ENCODE measurements at regions of chr22 and their contacts with region 1.

Region 1: DNA sequence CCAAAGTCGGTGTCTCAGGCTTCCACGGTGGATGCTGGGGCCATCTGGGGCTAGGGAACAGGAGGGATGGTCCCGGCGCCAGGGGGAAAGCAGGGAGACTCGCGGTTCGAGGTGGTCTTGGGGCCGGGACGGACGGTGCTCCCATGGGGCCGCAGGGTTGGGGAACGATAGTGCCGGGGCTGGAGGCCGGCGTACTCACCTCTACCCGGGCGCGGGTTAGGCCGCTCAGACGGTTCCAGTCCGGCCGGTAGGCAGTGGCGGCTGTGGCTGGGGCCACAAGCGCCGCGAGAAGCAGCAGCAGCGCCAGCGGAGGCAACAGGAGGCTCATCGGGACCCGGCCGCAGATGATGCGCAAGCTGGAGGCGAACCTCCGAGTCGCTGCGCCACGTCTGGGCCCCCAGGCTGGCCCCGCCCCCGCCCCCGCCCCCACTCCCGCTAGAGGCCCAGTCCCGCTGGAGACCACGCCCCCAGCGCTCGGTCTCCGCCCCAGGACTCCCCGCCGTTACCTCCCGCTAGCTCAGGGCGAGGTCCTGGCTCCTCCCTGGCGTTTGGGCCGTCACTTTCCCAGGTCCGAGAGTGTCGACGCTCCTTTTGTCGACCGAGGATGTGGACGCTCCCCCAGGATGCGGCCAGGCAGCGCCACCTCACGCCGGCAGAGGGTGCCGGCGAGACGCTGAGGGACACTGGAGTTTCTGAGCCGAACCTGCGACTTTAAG is at the start of gene SELENOM:
- DNase-seq: peak; percentile 99
- H3K4me3 Mint-ChIP-seq: peak within 1 kb of the TSS; percentile 82
- H3K27ac Mint-ChIP-seq: peak within 1 kb of the TSS; percentile 96
- H3K4me1 Mint-ChIP-seq: peaks cover 23% of the 10 kb centered on the region
- H3K27me3 Mint-ChIP-seq: no peaks in the 10 kb centered on the region
- CTCF ChIP-seq: peak; percentile 92
- total RNA-seq, gene SELENOM: 44.9 and 88.7 TPM in 2 replicates

Region 2: GRCh38 chr22:30650508-30651116 is 456.7 kb before region 1 on chr22:
- CTCF ChIA-PET with region 1: no interaction called
- POLR2A ChIA-PET with region 1: no interaction called
- intact Hi-C with region 1: no loop called
- DNase-seq: no peak
- H3K4me3 Mint-ChIP-seq: no peak overlapping the region
- H3K27ac Mint-ChIP-seq: no peak overlapping the region
- H3K4me1 Mint-ChIP-seq: no peaks in the 10 kb centered on the region
- H3K27me3 Mint-ChIP-seq: no peaks in the 10 kb centered on the region
- CTCF ChIP-seq: no peak

Region 3: DNA sequence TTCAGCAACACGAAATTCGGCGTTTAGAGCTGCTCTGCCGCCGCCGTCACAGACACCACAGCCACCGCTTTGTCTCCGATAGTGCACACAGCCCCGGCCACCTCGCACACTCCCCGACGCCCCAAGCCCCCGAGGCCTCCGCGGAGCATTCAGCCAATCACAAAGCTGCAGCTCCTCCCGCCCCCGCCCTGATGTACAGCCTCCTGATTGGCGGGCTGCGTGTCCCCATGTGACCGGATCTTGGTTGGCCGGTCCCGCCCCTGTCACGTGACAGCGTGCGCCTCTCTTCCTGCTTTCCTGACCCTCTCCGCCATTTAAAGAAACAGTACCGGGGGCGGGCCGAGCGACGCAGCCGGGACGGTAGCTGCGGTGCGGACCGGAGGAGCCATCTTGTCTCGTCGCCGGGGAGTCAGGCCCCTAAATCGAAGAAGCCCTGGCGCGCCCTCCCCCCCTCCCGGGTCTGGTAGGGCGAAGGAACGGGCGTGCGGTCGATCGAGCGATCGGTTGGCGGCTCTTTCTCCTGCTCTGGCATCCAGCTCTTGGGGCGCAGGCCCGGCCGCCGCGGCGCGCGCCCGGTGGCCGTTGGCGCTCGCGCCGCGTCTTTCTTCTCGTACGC is 138.3 kb before region 1 on chr22 and contains the start of gene TUG1:
- CTCF ChIA-PET with region 1: interaction called, 4 read pairs
- POLR2A ChIA-PET with region 1: interaction called, 14 read pairs
- intact Hi-C with region 1: no loop called
- DNase-seq: peak; percentile 98
- H3K4me3 Mint-ChIP-seq: peak within 1 kb of the TSS; percentile 88
- H3K27ac Mint-ChIP-seq: peak within 1 kb of the TSS; percentile 88
- H3K4me1 Mint-ChIP-seq: peaks cover 28% of the 10 kb centered on the region
- H3K27me3 Mint-ChIP-seq: no peaks in the 10 kb centered on the region
- CTCF ChIP-seq: no peak
- total RNA-seq, gene TUG1: 85.5 and 99.0 TPM in 2 replicates

Region 4: DNA sequence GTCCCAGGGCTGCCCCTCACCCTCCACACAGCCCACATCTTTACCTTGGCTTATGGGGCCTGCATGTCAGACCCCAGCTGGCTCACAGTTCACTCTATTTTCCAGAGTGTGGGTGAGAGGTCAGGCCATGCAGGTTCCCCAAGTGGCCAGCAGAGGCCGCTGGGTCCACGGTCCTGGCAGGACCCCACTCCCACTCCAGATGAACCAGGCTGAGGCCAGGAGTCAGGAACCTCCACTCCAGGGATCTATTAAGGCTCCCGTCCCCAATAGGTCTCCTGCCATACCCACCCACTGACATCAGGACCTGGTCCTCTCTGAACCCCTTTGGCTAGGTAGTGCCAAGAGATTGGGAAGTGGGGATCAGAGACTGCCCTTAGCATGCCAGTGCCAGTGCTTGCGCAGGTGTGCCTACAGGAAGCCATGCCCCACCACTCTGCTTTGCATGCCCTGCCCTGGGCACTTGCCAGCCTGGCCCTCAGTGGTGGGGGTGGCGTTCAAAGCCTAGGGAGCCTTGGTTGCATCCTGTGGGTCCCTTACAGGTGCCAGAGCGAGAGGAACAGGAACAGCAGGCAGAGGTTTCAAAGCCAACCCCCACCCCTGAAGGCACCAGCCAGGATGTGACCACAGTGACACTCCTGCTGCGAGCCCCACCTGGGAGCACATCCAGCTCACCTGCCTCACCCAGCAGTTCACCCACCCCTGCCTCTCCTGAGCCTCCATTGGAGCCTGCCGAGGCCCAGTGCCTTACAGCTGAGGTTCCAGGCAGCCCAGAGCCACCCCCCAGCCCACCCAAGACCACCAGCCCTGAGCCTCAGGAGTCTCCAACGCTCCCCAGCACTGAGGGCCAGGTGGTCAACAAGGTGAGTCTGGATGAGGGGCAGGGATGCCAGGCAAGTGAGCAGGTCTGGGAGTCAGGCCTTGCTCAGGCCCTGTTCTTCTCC is 17.9 kb before region 1 on chr22:
- CTCF ChIA-PET with region 1: interaction called, 21 read pairs
- POLR2A ChIA-PET with region 1: interaction called, 8 read pairs
- intact Hi-C with region 1: loop called (anchors 1 kb)
- DNase-seq: peak; percentile 32
- H3K4me3 Mint-ChIP-seq: no peak overlapping the region
- H3K27ac Mint-ChIP-seq: peak overlapping the region; percentile 29
- H3K4me1 Mint-ChIP-seq: peaks cover under 1% of the 10 kb centered on the region
- H3K27me3 Mint-ChIP-seq: no peaks in the 10 kb centered on the region
- CTCF ChIP-seq: peak; percentile 78

Region 5: DNA sequence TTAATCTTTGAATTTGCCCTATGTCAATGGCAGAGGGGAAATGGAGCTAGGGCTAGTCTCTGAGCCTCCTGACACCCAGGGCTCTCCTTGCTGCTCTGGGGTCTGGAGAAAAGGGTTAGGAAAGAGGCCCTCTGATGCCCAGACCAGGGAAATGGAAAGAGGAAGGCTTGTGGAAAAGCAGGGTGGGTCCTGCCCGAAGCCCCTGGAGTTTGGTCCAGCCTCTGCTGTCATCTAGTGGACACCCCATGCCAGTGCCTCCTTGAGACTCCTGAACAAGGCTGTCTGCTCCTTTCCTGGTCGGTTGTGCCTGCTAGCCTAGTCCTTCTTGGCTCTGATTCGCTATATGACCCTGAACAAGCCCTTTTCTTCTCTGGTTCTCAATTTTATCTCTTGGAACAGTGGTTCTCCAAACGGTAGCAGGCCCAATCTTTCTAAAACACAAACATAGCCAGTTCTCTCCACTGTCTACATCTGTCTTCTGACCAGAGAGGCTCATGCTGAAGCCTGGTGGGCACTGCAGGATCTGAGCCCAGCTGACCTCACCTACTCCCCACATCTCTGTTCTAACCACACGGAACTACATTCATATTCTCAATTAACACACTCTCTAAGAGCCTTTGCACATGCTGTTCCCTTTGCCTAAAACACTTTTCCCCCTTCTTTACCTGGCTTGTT is 41.8 kb after region 1 on chr22:
- CTCF ChIA-PET with region 1: interaction called, 40 read pairs
- POLR2A ChIA-PET with region 1: interaction called, 7 read pairs
- intact Hi-C with region 1: loop called (anchors 1 kb)
- DNase-seq: peak; percentile 75
- H3K4me3 Mint-ChIP-seq: no peak overlapping the region
- H3K27ac Mint-ChIP-seq: peak overlapping the region; percentile 6
- H3K4me1 Mint-ChIP-seq: peaks cover 9% of the 10 kb centered on the region
- H3K27me3 Mint-ChIP-seq: no peaks in the 10 kb centered on the region
- CTCF ChIP-seq: peak; percentile 92

Region 6: DNA sequence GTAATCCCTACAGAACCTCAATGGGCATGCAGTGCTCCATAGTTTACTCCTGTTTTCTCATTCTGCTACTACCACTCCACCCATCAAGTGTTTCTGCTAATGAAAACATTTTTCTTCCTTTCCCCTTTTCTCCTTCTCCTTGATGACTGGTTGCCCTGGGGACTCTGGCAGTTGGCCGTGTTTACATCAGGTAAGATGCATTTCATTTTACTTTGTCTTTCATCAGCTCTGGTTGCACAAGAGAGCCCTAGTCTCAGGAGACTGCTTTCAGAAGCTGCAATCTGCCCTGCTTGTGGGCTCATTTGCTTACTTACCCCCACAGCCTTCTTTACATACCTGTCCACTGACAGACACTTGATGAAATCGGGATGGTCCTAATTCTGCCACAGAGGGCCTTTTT is 85.2 kb after region 1 on chr22:
- CTCF ChIA-PET with region 1: interaction called, 10 read pairs
- POLR2A ChIA-PET with region 1: no interaction called
- intact Hi-C with region 1: no loop called
- DNase-seq: peak; percentile 69
- H3K4me3 Mint-ChIP-seq: no peak overlapping the region
- H3K27ac Mint-ChIP-seq: peak overlapping the region; percentile 88
- H3K4me1 Mint-ChIP-seq: peaks cover 17% of the 10 kb centered on the region
- H3K27me3 Mint-ChIP-seq: no peaks in the 10 kb centered on the region
- CTCF ChIP-seq: no peak

Region 7: DNA sequence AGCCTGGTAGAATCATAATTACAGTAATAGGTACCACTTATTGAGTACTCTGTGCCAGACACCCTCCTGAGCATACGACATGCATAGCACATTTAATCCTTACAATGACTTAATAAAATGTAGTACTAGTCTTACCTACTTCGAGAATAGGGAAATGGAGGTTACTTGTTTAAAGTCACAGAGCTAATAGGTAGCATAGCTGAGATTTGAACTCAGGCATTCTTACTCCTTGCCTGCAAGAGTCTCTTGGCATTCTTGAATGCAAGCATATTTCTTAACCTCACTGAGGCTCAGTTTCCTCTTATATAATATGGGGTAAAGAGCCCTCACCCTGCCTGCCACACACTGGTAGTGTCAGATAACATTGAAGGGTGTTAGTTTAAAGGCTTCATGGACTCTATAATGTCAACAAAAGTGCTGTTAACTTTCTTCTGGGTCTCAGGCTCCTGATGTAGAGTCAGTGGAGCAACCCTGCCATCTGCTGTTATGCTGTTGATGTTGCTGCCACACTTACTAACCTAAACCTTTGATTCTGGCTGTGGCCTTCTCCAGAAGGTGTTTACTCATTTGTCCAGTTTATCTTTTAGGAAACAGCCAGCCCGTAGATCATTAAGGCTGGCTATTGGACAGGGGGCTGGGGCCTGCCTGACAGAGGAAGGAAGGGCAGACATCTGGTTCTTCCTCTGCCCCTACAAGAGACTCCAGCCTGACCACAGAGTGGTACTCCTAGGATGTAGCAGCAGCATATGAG is 123.7 kb after region 1 on chr22:
- CTCF ChIA-PET with region 1: interaction called, 62 read pairs
- POLR2A ChIA-PET with region 1: interaction called, 9 read pairs
- intact Hi-C with region 1: loop called (anchors 1 kb)
- DNase-seq: peak; percentile 47
- H3K4me3 Mint-ChIP-seq: no peak overlapping the region
- H3K27ac Mint-ChIP-seq: peak overlapping the region; percentile 46
- H3K4me1 Mint-ChIP-seq: peaks cover 12% of the 10 kb centered on the region
- H3K27me3 Mint-ChIP-seq: no peaks in the 10 kb centered on the region
- CTCF ChIP-seq: peak; percentile 57